Activated CD4-positive, alpha-beta memory T cell treated with anti-CD3 and anti-CD28 coated beads for 36 hours (primary cell): ENCODE measurements at regions of chr3 and their contacts with region 1.

Region 1: GRCh38 chr3:188309437-188310269 is 155.7 kb downstream of the LPP start:
- DNase-seq: peak; percentile 49
- H3K4me3 Mint-ChIP-seq: peak overlapping the region; percentile 34
- H3K27ac Mint-ChIP-seq: peak overlapping the region; percentile 64
- H3K4me1 Mint-ChIP-seq: peaks cover 22% of the 10 kb centered on the region
- H3K27me3 Mint-ChIP-seq: no peaks in the 10 kb centered on the region

Region 2: GRCh38 chr3:188320757-188321156 is 11.1 kb after region 1 on chr3:
- CTCF ChIA-PET with region 1: interaction called, 4 read pairs
- POLR2A ChIA-PET with region 1: interaction called, 4 read pairs
- intact Hi-C with region 1: loop called (anchors 1 kb)
- DNase-seq: no peak
- H3K4me3 Mint-ChIP-seq: no peak overlapping the region
- H3K27ac Mint-ChIP-seq: no peak overlapping the region
- H3K4me1 Mint-ChIP-seq: peaks cover 58% of the 10 kb centered on the region
- H3K27me3 Mint-ChIP-seq: peaks cover 2% of the 10 kb centered on the region